ENCODE measurements at regions of chr2 and their contacts with region 1.

Region 1: DNA sequence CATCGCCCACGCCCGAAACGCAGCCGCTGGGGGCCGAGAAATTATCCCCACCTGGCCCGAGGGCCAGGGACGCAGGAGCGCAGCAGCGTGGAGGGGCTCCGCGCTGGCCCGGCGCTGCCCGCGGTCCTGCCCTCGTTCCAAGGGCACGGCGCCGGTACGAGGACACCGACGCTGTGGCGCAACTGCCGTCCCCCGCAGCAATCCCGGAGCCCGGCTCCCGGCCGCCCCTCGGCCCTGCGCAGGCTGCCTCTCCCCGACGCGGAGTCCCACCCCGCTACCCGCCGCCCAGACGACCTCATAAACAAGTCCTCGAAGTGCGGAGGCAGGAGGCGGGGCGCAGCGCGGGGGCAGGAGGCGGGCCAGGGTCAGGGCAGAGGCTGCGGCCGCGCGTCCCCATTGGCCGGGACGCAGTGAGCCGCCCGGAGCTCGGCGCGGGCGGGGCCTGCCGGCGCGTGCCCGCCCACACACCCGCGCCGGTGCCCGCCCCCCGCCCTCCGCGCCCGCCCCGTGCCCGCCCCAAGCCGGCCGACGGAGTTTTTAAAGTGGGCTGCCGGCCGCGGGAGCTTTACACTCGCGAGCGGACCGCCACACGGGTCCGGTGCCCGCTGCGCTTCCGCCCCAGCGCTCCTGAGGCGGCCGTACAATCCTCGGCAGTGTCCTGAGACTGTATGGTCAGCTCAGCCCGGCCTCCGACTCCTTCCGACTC is at the start of gene EPAS1:
- DNase-seq: peak; percentile 80
- H3K4me3 ChIP-seq: peak within 1 kb of the TSS; percentile 62 to 96 (median 89)
- H3K27ac ChIP-seq: peak within 1 kb of the TSS; percentile 51
- H3K4me1 ChIP-seq: peaks cover 20% of the 10 kb centered on the region
- H3K27me3 ChIP-seq: no peaks in the 10 kb centered on the region
- CTCF ChIP-seq: no peak
- total RNA-seq, gene EPAS1: 130 to 174 TPM

Region 2: GRCh38 chr2:46010925-46011490 is 286.0 kb before region 1 on chr2:
- CTCF ChIA-PET with region 1: no interaction called
- dilution Hi-C with region 1: no loop called
- in situ Hi-C with region 1: loop called in 1 of 2 experiments (anchors 5 kb)
- intact Hi-C with region 1: loop called (anchors 1 kb)
- DNase-seq: peak; percentile 37
- H3K4me3 ChIP-seq: no peak overlapping the region
- H3K27ac ChIP-seq: no peak overlapping the region
- H3K4me1 ChIP-seq: peaks cover 36% of the 10 kb centered on the region
- H3K27me3 ChIP-seq: no peaks in the 10 kb centered on the region
- CTCF ChIP-seq: peak; percentile 62 to 69

Region 3: GRCh38 chr2:46171411-46171953 is 125.5 kb before region 1 on chr2:
- CTCF ChIA-PET with region 1: no interaction called
- dilution Hi-C with region 1: no loop called
- in situ Hi-C with region 1: no loop called
- intact Hi-C with region 1: loop called (anchors 1 kb)
- DNase-seq: peak; percentile 87
- H3K4me3 ChIP-seq: no peak overlapping the region
- H3K27ac ChIP-seq: peak overlapping the region; percentile 84
- H3K4me1 ChIP-seq: peaks cover 49% of the 10 kb centered on the region
- H3K27me3 ChIP-seq: no peaks in the 10 kb centered on the region
- CTCF ChIP-seq: no peak

Region 4: DNA sequence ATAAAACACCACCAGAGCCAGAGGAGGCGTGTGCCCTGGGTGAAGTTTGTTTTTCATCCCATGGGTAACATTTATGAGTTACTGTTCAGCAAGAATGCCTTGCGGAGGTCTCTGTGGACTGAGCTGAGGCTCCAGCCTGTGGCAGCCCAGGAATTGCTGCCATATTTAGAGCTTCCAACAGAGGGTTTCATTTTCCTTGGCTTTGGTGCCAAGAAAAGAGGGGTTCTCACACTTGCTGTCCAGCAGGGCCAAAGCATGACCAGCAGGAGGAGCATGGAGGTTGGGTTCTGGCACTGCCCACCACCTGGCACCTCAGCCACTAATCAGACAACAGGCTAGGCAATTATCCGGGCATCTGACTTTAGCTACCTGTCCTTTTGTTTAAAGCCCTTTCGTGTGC is 36.9 kb after region 1 on chr2:
- CTCF ChIA-PET with region 1: interaction called, 8 read pairs
- dilution Hi-C with region 1: no loop called
- in situ Hi-C with region 1: no loop called
- intact Hi-C with region 1: loop called (anchors 1 kb)
- DNase-seq: no peak
- H3K4me3 ChIP-seq: no peak overlapping the region
- H3K27ac ChIP-seq: peak overlapping the region; percentile 93
- H3K4me1 ChIP-seq: peaks cover 90% of the 10 kb centered on the region
- H3K27me3 ChIP-seq: no peaks in the 10 kb centered on the region
- CTCF ChIP-seq: peak; percentile 3 to 22

Region 5: DNA sequence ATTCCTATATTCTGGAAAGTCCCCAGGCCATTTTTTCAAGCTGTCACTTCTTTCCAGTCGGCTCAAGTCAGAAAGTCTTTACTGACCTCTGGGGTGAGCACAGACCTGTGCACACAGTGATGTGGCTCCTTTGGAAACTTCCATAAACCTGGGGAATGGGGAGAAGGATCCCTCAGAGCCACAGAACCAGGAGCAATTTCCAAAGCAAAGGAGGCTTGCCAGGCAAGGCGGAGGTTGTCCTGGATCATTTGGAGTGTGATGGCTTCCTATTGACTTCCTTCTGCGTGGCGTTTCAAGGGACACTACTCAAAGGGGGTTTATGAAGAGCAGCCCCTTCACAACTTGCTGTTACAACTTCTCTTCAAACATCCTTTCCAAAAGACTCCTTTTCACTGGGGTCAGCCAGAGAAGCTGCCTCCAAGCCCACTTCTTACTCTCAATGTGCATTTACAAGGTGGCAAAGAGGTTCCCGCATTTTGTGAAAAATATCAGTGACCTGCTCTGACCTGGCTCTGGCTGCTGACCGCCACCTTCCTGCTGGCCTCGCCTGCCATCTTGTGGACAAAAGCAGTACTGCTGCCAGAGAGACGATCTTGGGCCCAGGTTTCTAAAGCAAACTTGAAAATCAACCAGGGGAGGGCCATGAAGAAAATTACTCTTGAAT is 164.2 kb after region 1 on chr2:
- CTCF ChIA-PET with region 1: no interaction called
- dilution Hi-C with region 1: no loop called
- in situ Hi-C with region 1: no loop called
- intact Hi-C with region 1: loop called (anchors 1 kb)
- DNase-seq: peak; percentile 32
- H3K4me3 ChIP-seq: no peak overlapping the region
- H3K27ac ChIP-seq: no peak overlapping the region
- H3K4me1 ChIP-seq: no peaks in the 10 kb centered on the region
- H3K27me3 ChIP-seq: no peaks in the 10 kb centered on the region
- CTCF ChIP-seq: peak; percentile 97 to 100